Mammary epithelial cell (primary cell): ENCODE measurements at regions of chr15 and their contacts with region 1.

Region 1: DNA sequence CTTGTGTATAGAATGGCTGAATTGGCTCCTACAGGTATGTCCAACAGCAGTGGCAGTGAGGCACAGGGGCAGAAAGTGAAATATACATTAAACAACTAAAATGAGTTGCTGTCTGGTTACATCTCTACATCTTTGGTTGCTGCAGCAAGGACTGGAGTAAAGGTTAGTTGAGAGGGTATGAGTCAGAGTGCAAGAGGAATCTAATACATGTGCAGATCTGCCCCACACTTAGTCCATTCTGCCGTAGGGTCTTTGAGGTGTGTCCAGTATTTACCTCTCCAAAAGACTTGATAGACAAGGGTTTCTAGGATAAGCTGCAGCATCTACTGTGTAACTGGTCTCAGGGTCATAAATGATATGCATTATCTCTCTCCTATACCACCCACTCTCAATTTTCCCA is 6.2 kb upstream of the NEDD4 start:
- DNase-seq: peak; percentile 78
- H3K4me3 ChIP-seq: no peak overlapping the region
- H3K27ac ChIP-seq: peak overlapping the region; percentile 6
- H3K4me1 ChIP-seq: peaks cover 47% of the 10 kb centered on the region
- H3K27me3 ChIP-seq: no peaks in the 10 kb centered on the region
- CTCF ChIP-seq: no peak

Region 2: DNA sequence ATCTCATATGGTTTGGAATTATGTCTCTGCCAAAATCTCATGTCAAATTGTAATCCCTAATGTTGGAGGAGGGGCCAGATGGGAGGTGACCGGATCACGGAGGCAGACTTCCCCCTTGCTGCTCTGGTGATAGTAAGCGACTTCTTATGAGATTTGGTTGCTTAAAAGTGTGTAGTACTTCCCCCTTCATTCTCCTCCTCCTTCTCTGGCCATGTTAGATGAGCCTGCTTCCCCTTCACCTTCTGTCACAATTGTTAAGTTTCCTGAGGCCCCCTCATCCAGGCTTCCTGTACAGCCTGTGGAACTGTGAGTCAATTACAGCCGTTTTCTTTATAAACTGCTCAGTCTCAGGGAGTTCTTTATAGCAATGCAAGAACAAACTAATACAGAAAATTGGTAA is 57.3 kb before region 1 on chr15:
- CTCF ChIA-PET with region 1: no interaction called
- dilution Hi-C with region 1: loop called (anchors 5 kb)
- in situ Hi-C with region 1: no loop called
- intact Hi-C with region 1: no loop called
- DNase-seq: no peak
- H3K4me3 ChIP-seq: no peak overlapping the region
- H3K27ac ChIP-seq: no peak overlapping the region
- H3K4me1 ChIP-seq: no peaks in the 10 kb centered on the region
- H3K27me3 ChIP-seq: no peaks in the 10 kb centered on the region
- CTCF ChIP-seq: no peak

Region 3: DNA sequence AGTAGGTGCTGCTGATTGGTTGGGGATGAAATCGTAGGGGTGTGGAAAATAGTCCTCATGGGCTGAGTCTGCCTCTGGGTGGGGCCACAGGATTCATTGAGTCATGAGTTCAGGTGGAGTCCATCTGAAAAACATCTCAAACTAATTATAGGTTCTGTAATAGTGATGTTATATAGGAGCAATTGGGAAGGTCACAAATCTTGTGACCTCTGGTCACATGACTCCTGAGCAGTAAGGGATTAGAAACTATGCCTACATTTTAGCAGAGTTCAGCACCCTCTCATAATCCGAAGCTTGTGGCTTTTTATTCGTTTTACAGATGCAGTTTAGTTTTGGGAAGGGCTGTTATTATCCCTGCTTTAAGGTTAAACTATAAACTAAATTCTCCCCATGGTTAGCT is 16.6 kb after region 1 on chr15:
- CTCF ChIA-PET with region 1: no interaction called
- dilution Hi-C with region 1: no loop called
- in situ Hi-C with region 1: no loop called
- intact Hi-C with region 1: no loop called
- DNase-seq: no peak
- H3K4me3 ChIP-seq: no peak overlapping the region
- H3K27ac ChIP-seq: no peak overlapping the region
- H3K4me1 ChIP-seq: peaks cover 8% of the 10 kb centered on the region
- H3K27me3 ChIP-seq: no peaks in the 10 kb centered on the region
- CTCF ChIP-seq: no peak

Region 4: GRCh38 chr15:56040081-56041035 is 40.7 kb after region 1 on chr15:
- CTCF ChIA-PET with region 1: no interaction called
- dilution Hi-C with region 1: loop called (anchors 5 kb)
- in situ Hi-C with region 1: loop called (anchors 5 kb)
- intact Hi-C with region 1: loop called (anchors 1 kb)
- DNase-seq: peak; percentile 97
- H3K4me3 ChIP-seq: no peak overlapping the region
- H3K27ac ChIP-seq: peak overlapping the region; percentile 97
- H3K4me1 ChIP-seq: peaks cover 47% of the 10 kb centered on the region
- H3K27me3 ChIP-seq: no peaks in the 10 kb centered on the region
- CTCF ChIP-seq: no peak

Region 5: GRCh38 chr15:56047354-56047753 is 47.7 kb after region 1 on chr15:
- CTCF ChIA-PET with region 1: no interaction called
- dilution Hi-C with region 1: loop called (anchors 5 kb)
- in situ Hi-C with region 1: loop called in 1 of 2 experiments (anchors 5 kb)
- intact Hi-C with region 1: no loop called
- DNase-seq: peak; percentile 70
- H3K4me3 ChIP-seq: no peak overlapping the region
- H3K27ac ChIP-seq: peak overlapping the region; percentile 59
- H3K4me1 ChIP-seq: peaks cover 27% of the 10 kb centered on the region
- H3K27me3 ChIP-seq: no peaks in the 10 kb centered on the region
- CTCF ChIP-seq: no peak

Region 6: GRCh38 chr15:56086566-56086965 is 86.9 kb after region 1 on chr15:
- CTCF ChIA-PET with region 1: no interaction called
- dilution Hi-C with region 1: no loop called
- in situ Hi-C with region 1: no loop called
- intact Hi-C with region 1: no loop called
- DNase-seq: no peak
- H3K4me3 ChIP-seq: no peak overlapping the region
- H3K27ac ChIP-seq: no peak overlapping the region
- H3K4me1 ChIP-seq: peaks cover 5% of the 10 kb centered on the region
- H3K27me3 ChIP-seq: no peaks in the 10 kb centered on the region
- CTCF ChIP-seq: no peak